T-cell (primary cell): ENCODE measurements at regions of chr2 and their contacts with region 1.

Region 1: GRCh38 chr2:42775186-42775585 is 11.3 kb upstream of the OXER1 start:
- DNase-seq: no peak
- ATAC-seq: no peak
- H3K4me3 ChIP-seq: no peak overlapping the region
- H3K4me3 Mint-ChIP-seq: peak overlapping the region in 1 of 3 donors; percentile 47
- H3K27ac ChIP-seq: no peak overlapping the region
- H3K27ac Mint-ChIP-seq: peak overlapping the region; percentile 55 to 81
- H3K4me1 ChIP-seq: peaks cover 13 to 18% of the 10 kb centered on the region in 2 experiments
- H3K4me1 Mint-ChIP-seq: peaks cover 18 to 35% (median 25%) of the 10 kb centered on the region in 3 donors
- H3K27me3 ChIP-seq: no peaks in the 10 kb centered on the region
- H3K27me3 Mint-ChIP-seq: no peaks in the 10 kb centered on the region

Region 2: DNA sequence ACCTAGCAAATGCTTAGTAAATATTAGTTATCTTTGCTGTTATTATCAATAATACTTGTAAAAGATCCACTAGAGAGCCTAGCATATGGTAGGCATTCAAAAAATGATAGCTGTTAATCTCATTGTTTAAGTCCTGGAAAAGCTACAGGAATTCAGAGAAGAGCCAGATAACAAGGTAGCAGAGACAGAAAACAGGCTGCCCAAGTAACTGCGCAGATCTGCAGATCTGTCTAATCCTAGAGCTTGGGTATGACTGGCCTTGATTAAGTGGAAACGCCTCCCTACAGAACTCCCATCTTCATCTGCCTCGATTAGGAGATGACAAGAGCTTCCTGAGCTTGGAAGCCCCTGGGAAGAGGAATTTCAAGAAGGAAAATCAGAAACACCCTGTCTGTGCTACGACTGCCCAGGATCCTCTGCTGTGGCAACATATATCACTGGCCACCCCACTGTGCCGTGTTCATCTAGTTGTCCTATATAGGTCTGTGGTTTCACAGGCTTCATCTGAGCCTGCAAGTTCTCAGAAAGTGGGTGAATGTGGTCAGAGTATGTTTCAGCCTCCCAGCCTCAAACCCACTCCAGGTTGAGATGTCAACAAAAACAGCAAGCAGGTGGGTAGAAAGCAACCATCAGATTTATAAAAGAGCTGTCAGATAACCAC is 878.9 kb before region 1 on chr2:
- CTCF ChIA-PET with region 1: interaction called in 1 of 2 experiments, 12 read pairs
- POLR2A ChIA-PET with region 1: no interaction called
- DNase-seq: peak in 30 of 35 experiments; percentile 2 to 66 (median 24)
- ATAC-seq: peak; percentile 66 to 95 (median 73)
- H3K4me3 ChIP-seq: no peak overlapping the region
- H3K4me3 Mint-ChIP-seq: peak overlapping the region in 2 of 3 donors; percentile 38 to 50
- H3K27ac ChIP-seq: peak overlapping the region; percentile 56
- H3K27ac Mint-ChIP-seq: peak overlapping the region; percentile 86 to 90
- H3K4me1 ChIP-seq: peaks cover 0 to 41% of the 10 kb centered on the region in 2 experiments
- H3K4me1 Mint-ChIP-seq: peaks cover 5 to 42% (median 23%) of the 10 kb centered on the region in 3 donors
- H3K27me3 ChIP-seq: no peaks in the 10 kb centered on the region
- H3K27me3 Mint-ChIP-seq: peaks cover 2 to 15% of the 10 kb centered on the region in 2 donors

Region 3: DNA sequence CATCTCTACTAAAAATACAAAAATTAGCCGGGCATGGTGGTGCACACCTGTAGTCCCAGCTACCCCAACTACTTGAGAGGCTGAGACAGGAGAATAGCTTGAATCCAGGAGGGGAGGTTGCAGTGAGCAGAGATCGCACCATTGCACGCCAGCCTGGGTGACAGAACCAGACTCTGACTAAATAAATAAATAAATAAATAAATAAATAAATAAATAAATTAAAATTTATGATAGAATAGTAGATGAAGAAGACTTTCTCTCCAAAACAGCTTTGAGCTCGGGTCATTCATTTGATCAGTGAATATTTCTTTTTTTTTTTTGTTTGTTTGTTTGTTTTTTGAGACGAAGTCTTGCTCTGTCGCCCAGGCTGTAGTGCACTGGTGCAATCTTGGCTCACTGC is 224.3 kb before region 1 on chr2:
- CTCF ChIA-PET with region 1: no interaction called
- POLR2A ChIA-PET with region 1: no interaction called
- DNase-seq: no peak
- ATAC-seq: no peak
- H3K4me3 ChIP-seq: no peak overlapping the region
- H3K4me3 Mint-ChIP-seq: no peak overlapping the region
- H3K27ac ChIP-seq: no peak overlapping the region
- H3K27ac Mint-ChIP-seq: no peak overlapping the region
- H3K4me1 ChIP-seq: peaks cover 0 to 5% of the 10 kb centered on the region in 2 experiments
- H3K4me1 Mint-ChIP-seq: peaks cover 0 to 7% (median 5%) of the 10 kb centered on the region in 3 donors
- H3K27me3 ChIP-seq: peaks cover 0 to 4% of the 10 kb centered on the region in 2 experiments
- H3K27me3 Mint-ChIP-seq: no peaks in the 10 kb centered on the region

Region 4: GRCh38 chr2:42758751-42759150 is 16.4 kb before region 1 on chr2:
- CTCF ChIA-PET with region 1: no interaction called
- POLR2A ChIA-PET with region 1: interaction called in 1 of 2 experiments, 11 read pairs
- DNase-seq: no peak
- ATAC-seq: no peak
- H3K4me3 ChIP-seq: no peak overlapping the region
- H3K4me3 Mint-ChIP-seq: no peak overlapping the region
- H3K27ac ChIP-seq: no peak overlapping the region
- H3K27ac Mint-ChIP-seq: no peak overlapping the region
- H3K4me1 ChIP-seq: no peaks in the 10 kb centered on the region
- H3K4me1 Mint-ChIP-seq: peaks cover 0 to 7% (median 4%) of the 10 kb centered on the region in 3 donors
- H3K27me3 ChIP-seq: no peaks in the 10 kb centered on the region
- H3K27me3 Mint-ChIP-seq: no peaks in the 10 kb centered on the region